ENCODE measurements at regions of chr2 and their contacts with region 1.

Region 1: DNA sequence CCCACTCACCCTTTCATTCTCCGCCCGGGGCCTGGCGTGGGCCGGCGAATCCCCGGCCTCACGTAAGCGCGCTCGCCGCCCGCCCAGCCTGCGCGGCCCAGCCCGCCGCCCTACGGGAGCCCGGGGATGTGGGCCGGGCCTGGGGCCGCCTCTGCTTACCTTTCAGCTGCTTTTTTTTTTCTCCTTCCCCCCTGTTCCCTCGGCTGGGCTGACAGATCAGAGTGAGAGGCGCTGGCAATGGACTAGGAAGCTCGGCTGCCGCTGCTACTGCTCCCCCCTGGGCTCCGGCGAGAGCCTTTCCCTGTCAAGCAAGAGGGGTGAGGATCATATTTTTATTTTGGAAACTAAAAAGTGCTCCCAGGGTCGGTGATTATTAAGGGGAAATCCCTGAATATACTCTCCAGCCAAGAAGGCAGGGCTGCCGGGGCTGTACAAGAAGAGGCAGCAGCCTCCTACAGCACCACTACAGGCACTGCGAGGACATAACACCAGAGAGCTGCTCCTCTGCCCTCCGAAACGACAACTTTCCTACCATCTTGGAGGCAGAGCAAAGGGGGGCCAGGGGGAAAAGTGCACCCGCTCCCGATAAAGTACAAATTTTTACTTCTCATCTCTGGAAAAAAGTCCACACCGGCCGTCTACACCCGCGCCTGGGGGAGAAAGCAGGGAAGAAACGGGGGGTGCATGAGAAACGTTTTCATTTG is at the start of gene INO80D:
- DNase-seq: peak in 1 of 2 experiments; percentile 74
- H3K4me3 ChIP-seq: peak within 1 kb of the TSS; percentile 64 to 99 (median 94)
- H3K27ac ChIP-seq: peak within 1 kb of the TSS; percentile 87
- H3K4me1 ChIP-seq: peaks cover 2 to 14% (median 7%) of the 10 kb centered on the region in 4 experiments; a peak in 5 of 7 replicates
- H3K27me3 ChIP-seq: no peaks in the 10 kb centered on the region
- CTCF ChIP-seq: peak in 2 of 3 experiments; percentile 47 to 52; a peak in 2 of 4 replicates
- EP300 ChIP-seq: 0 out of 3 replicates have a peak, but pooled peaks of 1 of the 2 experiments have one; percentile 3
- POLR2A ChIP-seq: peak in 1 of 2 experiments; percentile 74; a peak in 2 of 3 replicates
- RAD21 ChIP-seq: peak; percentile 37
- total RNA-seq, gene INO80D: 37.4 and 38.9 TPM in 2 replicates

Region 2: DNA sequence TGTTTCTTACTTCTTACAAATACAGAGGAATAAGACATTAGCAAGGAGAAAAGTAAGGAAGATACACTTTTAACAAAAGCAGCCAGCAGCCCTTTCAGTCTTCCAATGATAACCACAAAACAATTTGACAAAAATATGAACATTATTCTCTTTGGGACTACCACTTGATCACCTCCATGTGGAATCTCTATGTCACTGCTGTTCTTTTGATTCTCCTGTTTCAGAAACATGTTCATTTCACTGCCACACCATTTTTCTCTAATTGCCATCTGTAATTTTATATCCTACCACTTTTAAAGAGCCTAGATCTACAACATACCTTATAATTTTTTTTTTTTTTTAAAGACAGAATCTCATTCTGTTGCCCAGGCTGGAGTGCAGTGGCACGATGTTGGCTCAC is 10.8 kb before region 1 on chr2:
- CTCF ChIA-PET with region 1: interaction called, 3 read pairs
- POLR2A ChIA-PET with region 1: interaction called, 34 read pairs
- DNase-seq: no peak
- H3K4me3 ChIP-seq: no peak overlapping the region
- H3K27ac ChIP-seq: no peak overlapping the region
- H3K4me1 ChIP-seq: peaks cover 2 to 13% (median 11%) of the 10 kb centered on the region in 4 experiments; a peak in 6 of 7 replicates
- H3K27me3 ChIP-seq: no peaks in the 10 kb centered on the region
- CTCF ChIP-seq: no peak
- EP300 ChIP-seq: no peak
- POLR2A ChIP-seq: no peak
- RAD21 ChIP-seq: no peak

Region 3: GRCh38 chr2:206241736-206242135 is 155.8 kb after region 1 on chr2:
- CTCF ChIA-PET with region 1: no interaction called
- POLR2A ChIA-PET with region 1: no interaction called
- DNase-seq: no peak
- H3K4me3 ChIP-seq: no peak overlapping the region
- H3K27ac ChIP-seq: no peak overlapping the region
- H3K4me1 ChIP-seq: no peaks in the 10 kb centered on the region
- H3K27me3 ChIP-seq: no peaks in the 10 kb centered on the region
- CTCF ChIP-seq: no peak
- EP300 ChIP-seq: no peak
- POLR2A ChIP-seq: no peak
- RAD21 ChIP-seq: no peak